Calu3 (cell line): ENCODE measurements at regions of chr2 and their contacts with region 1.

Region 1: DNA sequence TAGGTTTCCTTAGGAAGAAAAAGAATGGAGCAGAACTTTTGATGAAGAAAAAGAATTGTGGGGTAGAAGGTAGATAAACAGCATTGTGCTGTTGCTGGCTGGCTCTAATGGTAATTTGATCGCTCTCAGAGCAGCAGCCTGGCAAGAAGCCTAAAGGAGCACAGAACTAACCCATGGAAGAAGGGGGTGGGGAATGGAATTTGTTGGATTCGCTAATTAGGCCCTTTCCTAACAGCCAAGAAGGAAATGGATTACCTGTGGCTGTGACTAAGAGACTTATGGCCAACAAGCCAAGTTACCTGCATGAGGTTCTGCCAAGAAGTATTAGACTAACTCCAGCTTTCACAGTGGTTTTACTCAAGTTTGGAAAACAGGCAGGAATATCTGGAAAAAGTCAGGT is 210.6 kb downstream of the IKZF2 start:
- DNase-seq: peak; percentile 69
- H3K4me3 Mint-ChIP-seq: no peak overlapping the region
- H3K27ac Mint-ChIP-seq: peak overlapping the region; percentile 30
- H3K4me1 Mint-ChIP-seq: peaks cover 17% of the 10 kb centered on the region
- H3K27me3 Mint-ChIP-seq: no peaks in the 10 kb centered on the region
- CTCF ChIP-seq: no peak

Region 2: GRCh38 chr2:212919250-212919649 is 21.6 kb before region 1 on chr2:
- CTCF ChIA-PET with region 1: interaction called, 4 read pairs
- intact Hi-C with region 1: loop called (anchors 2 kb)
- DNase-seq: peak; percentile 55
- H3K4me3 Mint-ChIP-seq: no peak overlapping the region
- H3K27ac Mint-ChIP-seq: peak overlapping the region; percentile 19
- H3K4me1 Mint-ChIP-seq: peaks cover 55% of the 10 kb centered on the region
- H3K27me3 Mint-ChIP-seq: no peaks in the 10 kb centered on the region
- CTCF ChIP-seq: no peak

Region 3: DNA sequence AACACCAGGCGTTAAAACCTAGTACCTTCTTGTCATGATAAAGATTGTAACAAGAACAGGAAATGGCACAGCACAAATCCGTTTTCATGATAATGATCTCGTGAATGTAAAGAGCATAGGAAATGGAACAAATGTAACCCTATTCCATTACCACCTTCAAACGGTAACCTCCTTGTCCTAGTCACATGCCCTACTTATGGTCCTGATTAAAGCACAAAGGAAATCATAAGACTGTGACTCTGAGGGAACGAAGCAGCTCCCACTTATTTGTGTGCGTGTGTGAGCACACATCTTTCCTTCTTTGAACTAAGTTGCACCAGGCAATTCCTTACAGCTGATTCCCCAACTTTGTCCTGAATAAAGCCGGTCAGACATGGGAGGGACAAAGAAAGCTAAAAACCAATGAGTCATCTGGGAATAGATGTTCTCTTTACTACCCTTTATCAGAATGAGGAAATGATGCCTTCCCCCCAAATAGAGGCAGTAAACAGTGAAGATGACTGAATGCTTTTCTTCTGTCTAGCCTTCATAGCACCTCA is 18.0 kb after region 1 on chr2:
- CTCF ChIA-PET with region 1: no interaction called
- intact Hi-C with region 1: no loop called
- DNase-seq: no peak
- H3K4me3 Mint-ChIP-seq: no peak overlapping the region
- H3K27ac Mint-ChIP-seq: no peak overlapping the region
- H3K4me1 Mint-ChIP-seq: no peaks in the 10 kb centered on the region
- H3K27me3 Mint-ChIP-seq: no peaks in the 10 kb centered on the region
- CTCF ChIP-seq: no peak

Region 4: DNA sequence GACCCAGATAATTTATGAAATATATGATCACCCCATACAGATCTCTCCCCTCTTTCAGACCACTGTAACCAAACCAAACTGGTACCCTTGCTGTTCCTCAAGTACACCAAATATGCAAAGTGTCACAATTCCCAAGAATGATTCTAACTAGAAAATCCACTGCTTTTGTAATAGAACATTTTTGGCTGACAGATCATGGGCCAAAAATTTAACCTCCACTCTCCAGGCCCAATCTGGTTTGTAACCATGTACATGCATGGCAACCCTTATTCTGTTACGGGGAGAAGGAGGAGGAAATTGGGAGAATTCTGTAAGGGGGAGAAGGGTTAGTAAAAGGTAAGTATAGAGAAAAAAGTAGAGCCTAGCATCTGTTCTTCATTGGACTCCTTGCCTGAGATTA is 148.6 kb after region 1 on chr2:
- CTCF ChIA-PET with region 1: no interaction called
- intact Hi-C with region 1: no loop called
- DNase-seq: no peak
- H3K4me3 Mint-ChIP-seq: no peak overlapping the region
- H3K27ac Mint-ChIP-seq: no peak overlapping the region
- H3K4me1 Mint-ChIP-seq: peaks cover 28% of the 10 kb centered on the region
- H3K27me3 Mint-ChIP-seq: no peaks in the 10 kb centered on the region
- CTCF ChIP-seq: no peak

Region 5: DNA sequence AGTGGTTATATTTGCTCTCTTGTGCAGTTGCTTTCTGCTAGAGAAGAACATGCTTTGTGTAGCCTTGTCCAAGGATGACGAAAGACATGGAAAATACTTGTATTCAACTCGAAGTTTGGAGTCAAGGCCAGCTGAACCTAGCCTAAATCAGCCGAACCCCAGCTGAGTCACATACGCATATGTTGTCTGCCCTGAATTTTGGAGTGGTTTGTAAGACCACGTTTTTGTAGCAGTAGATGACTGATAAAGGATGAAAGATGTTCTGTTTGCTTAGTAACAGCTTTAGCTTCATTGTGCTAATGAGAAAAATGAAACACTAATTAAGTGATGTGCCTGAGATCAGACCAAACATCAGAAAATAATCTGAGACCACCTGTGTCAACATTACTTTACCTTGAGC is 321.0 kb after region 1 on chr2:
- CTCF ChIA-PET with region 1: no interaction called
- intact Hi-C with region 1: no loop called
- DNase-seq: no peak
- H3K4me3 Mint-ChIP-seq: no peak overlapping the region
- H3K27ac Mint-ChIP-seq: no peak overlapping the region
- H3K4me1 Mint-ChIP-seq: no peaks in the 10 kb centered on the region
- H3K27me3 Mint-ChIP-seq: no peaks in the 10 kb centered on the region
- CTCF ChIP-seq: no peak